Left lung (tissue), 14 donors: ENCODE measurements at regions of chr6 and their contacts with region 1.

Region 1: GRCh38 chr6:113909234-113909856 is 52.2 kb downstream of the MARCKS start:
- DNase-seq: peak in 2 of 4 donors; percentile 56 to 71
- ATAC-seq: peak; percentile 49
- H3K4me3 ChIP-seq: no peak overlapping the region
- H3K27ac ChIP-seq: no peak overlapping the region
- H3K4me1 ChIP-seq: peaks cover 0 to 10% of the 10 kb centered on the region in 2 donors
- H3K27me3 ChIP-seq: no peaks in the 10 kb centered on the region
- CTCF ChIP-seq: peak; percentile 68 to 71

Region 2: GRCh38 chr6:112780498-112781096 is 1128.7 kb before region 1 on chr6:
- intact Hi-C with region 1: loop called in 1 of 2 experiments (anchors 10 kb)
- DNase-seq: peak in 3 of 4 donors; percentile 45 to 81 (median 56)
- ATAC-seq: peak; percentile 97
- H3K4me3 ChIP-seq: no peak overlapping the region
- H3K27ac ChIP-seq: no peak overlapping the region
- H3K4me1 ChIP-seq: peaks cover 0 to 4% of the 10 kb centered on the region in 2 donors
- H3K27me3 ChIP-seq: no peaks in the 10 kb centered on the region
- CTCF ChIP-seq: peak; percentile 63 to 77

Region 3: GRCh38 chr6:113065611-113066010 is 843.7 kb before region 1 on chr6:
- intact Hi-C with region 1: no loop called
- DNase-seq: no peak
- ATAC-seq: no peak
- H3K4me3 ChIP-seq: no peak overlapping the region
- H3K27ac ChIP-seq: no peak overlapping the region
- H3K4me1 ChIP-seq: peaks cover 0 to 2% of the 10 kb centered on the region in 2 donors
- H3K27me3 ChIP-seq: no peaks in the 10 kb centered on the region
- CTCF ChIP-seq: no peak

Region 4: DNA sequence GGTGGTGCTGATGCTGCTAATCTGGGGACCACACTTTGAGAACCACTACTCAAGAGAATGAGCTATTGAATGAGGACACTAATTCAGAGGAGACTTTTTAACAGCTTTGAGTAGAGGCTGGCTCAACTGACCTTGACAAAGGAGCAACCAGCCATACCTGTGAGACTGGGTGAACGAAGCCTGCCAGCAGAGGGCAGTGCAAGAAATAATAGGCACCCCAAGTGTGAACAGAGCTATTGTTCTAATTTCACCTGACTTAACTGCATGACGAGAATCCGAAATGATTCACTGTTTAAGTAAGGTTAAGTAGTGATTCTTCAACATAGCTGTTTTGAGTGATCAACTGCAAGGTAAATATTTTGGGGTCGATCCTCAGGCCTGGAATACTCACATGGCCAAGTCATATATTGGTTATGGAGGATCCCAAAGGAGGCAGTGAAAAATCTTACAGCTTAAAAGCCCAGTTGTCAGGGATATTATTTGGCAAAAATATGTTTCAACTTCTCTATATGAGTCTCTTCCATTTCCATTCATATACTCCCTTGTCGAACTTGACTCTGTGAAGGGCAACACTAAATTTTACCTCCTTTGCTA is 602.7 kb before region 1 on chr6:
- intact Hi-C with region 1: loop called in 1 of 2 experiments (anchors 10 kb)
- DNase-seq: peak in 3 of 4 donors; percentile 41 to 58 (median 44)
- ATAC-seq: peak; percentile 95
- H3K4me3 ChIP-seq: no peak overlapping the region
- H3K27ac ChIP-seq: no peak overlapping the region
- H3K4me1 ChIP-seq: no peaks in the 10 kb centered on the region
- H3K27me3 ChIP-seq: no peaks in the 10 kb centered on the region
- CTCF ChIP-seq: peak; percentile 47